ENCODE measurements at regions of chr18 and their contacts with region 1.

Region 1: DNA sequence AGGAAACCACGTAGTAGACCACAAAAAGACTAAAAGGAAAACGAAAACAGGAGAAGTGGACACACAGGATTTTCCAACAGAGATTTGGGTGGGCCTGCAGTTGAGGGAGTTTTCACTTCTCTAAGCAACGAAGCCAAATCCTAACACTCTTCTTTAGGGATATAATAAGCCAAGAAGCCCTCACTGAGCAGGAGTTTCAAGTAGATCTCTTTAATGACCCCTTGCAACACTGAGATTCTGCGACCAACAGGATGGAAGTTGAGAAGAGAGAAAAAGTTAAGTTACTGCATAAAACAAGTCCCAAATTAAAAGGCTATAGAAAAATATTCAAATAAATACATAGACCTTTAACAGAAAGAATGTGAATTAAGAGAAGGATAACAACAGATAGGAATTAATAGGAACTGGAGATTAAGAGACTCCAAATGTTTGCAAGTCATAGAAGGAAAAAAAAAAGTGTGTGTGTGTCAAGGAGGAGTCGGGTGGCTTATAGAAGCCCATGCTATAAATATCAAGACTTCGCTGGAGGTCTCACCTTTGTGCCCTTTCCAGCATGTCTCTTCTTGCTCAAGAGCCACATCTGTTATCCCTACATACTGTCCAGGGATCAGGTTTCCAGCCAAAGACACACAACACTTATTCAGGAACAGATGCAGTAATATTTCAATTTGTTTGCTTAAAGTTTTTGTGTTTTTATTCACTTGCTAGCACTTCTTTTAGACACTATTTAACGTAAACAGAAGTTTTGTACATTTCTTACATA is 69.4 kb upstream of the ARHGAP28 start:
- DNase-seq: peak; percentile 32
- ATAC-seq: peak; percentile 60
- H3K4me3 ChIP-seq: no peak overlapping the region
- H3K27ac ChIP-seq: no peak overlapping the region
- H3K4me1 ChIP-seq: no peaks in the 10 kb centered on the region
- H3K27me3 ChIP-seq: peaks cover 5% of the 10 kb centered on the region; the same call in 1 of the 2 replicates
- CTCF ChIP-seq: no peak
- POLR2A ChIP-seq: no peak
- RAD21 ChIP-seq: no peak

Region 2: DNA sequence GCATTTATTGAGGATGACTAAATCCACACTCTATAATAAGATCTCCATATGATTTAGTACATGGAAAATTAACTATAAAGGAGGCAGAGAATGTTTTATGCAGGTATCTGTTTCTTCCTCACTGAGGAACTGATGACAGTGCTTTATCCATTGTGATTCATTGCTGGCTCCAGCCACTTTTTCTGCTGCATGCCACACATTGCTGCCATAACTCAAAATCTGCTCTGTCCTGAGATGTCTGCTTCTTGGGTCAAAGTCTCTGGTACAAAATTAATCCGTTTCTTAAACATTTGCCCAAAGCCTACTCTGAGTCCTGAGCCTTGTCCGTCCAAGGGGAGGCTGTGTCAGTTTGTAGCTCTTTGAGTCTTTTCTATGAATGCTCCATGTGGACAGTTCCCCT is 53.9 kb after region 1 on chr18:
- CTCF ChIA-PET with region 1: no interaction called
- POLR2A ChIA-PET with region 1: no interaction called
- dilution Hi-C with region 1: no loop called
- in situ Hi-C with region 1: no loop called
- intact Hi-C with region 1: loop called (anchors 5 kb)
- DNase-seq: no peak
- ATAC-seq: peak; percentile 65
- H3K4me3 ChIP-seq: no peak overlapping the region
- H3K27ac ChIP-seq: no peak overlapping the region
- H3K4me1 ChIP-seq: peaks cover 3% of the 10 kb centered on the region
- H3K27me3 ChIP-seq: no peaks in the 10 kb centered on the region
- CTCF ChIP-seq: no peak
- POLR2A ChIP-seq: no peak
- RAD21 ChIP-seq: no peak

Region 3: DNA sequence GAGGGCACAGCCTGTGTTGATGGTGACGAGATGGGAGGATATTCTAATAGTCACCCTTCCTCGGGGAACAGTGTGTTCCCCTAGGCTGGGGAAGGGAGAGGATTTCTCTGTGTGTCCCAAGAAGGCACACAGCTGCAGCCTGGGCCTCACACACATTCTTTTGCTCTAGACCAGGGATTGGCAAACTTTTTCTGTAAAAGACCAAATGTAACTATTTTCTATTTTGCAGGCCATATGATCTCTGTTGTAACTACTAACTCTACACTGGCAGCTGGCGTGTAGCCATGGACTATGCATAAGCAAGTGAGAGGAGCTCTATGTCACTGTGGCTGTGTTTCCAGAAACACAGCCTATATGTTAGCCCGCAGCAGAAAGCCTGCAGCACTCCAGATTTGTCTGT is 135.2 kb after region 1 on chr18:
- CTCF ChIA-PET with region 1: no interaction called
- POLR2A ChIA-PET with region 1: no interaction called
- dilution Hi-C with region 1: no loop called
- in situ Hi-C with region 1: no loop called
- intact Hi-C with region 1: no loop called
- DNase-seq: peak; percentile 73
- ATAC-seq: peak; percentile 86
- H3K4me3 ChIP-seq: no peak overlapping the region
- H3K27ac ChIP-seq: peak overlapping the region; percentile 98; the same call in 1 of the 2 replicates
- H3K4me1 ChIP-seq: peaks cover 9% of the 10 kb centered on the region; the same call in 1 of the 2 replicates
- H3K27me3 ChIP-seq: no peaks in the 10 kb centered on the region
- CTCF ChIP-seq: no peak
- POLR2A ChIP-seq: no peak
- RAD21 ChIP-seq: no peak

Region 4: DNA sequence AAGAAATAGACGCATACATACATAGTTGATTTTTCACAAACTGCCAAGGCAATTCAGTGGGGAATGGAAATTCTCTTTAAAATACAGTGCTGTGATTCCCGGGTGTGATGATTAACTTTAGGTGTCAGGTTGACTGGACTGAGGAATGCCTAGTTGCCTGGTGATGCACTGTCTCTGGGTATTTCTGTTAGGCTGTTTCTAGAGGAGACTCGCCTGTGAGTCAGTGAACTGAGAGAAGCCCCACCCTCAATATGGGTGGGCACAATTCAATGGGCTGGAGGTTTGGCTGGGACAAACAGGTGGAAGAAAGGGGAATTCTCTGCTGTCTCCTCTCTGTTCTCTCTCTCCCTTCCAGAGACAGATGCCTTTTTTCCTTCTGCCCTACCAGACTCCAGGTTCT is 256.9 kb after region 1 on chr18:
- CTCF ChIA-PET with region 1: no interaction called
- POLR2A ChIA-PET with region 1: no interaction called
- dilution Hi-C with region 1: no loop called
- in situ Hi-C with region 1: no loop called
- intact Hi-C with region 1: no loop called
- DNase-seq: peak; percentile 4
- ATAC-seq: no peak
- H3K4me3 ChIP-seq: no peak overlapping the region
- H3K27ac ChIP-seq: no peak overlapping the region
- H3K4me1 ChIP-seq: no peaks in the 10 kb centered on the region
- H3K27me3 ChIP-seq: no peaks in the 10 kb centered on the region
- CTCF ChIP-seq: no peak
- POLR2A ChIP-seq: no peak
- RAD21 ChIP-seq: no peak

Measured in IMR-90 (cell line).